ENCODE measurements at regions of chr16 and their contacts with region 1.

Region 1: GRCh38 chr16:4208341-4208751 is 33.5 kb downstream of the SRL start:
- DNase-seq: peak in 4 of 5 donors; percentile 54 to 72 (median 62)
- ATAC-seq: peak in 2 of 4 donors; percentile 8 to 18
- H3K4me3 ChIP-seq: no peak overlapping the region
- H3K27ac ChIP-seq: peak overlapping the region; percentile 41 to 96 (median 70)
- H3K4me1 ChIP-seq: peaks cover 5 to 84% (median 42%) of the 10 kb centered on the region in 12 donors
- H3K27me3 ChIP-seq: no peaks in the 10 kb centered on the region
- CTCF ChIP-seq: no peak
- POLR2A ChIP-seq: no peak

Region 2: GRCh38 chr16:4019371-4019791 is 189.0 kb before region 1 on chr16:
- intact Hi-C with region 1: no loop called
- DNase-seq: no peak
- ATAC-seq: peak; percentile 34 to 67 (median 48)
- H3K4me3 ChIP-seq: peak overlapping the region in 10 of 12 donors; percentile 17 to 55 (median 41)
- H3K27ac ChIP-seq: peak overlapping the region in 8 of 12 donors; percentile 15 to 63 (median 54)
- H3K4me1 ChIP-seq: peaks cover 0 to 18% (median 6%) of the 10 kb centered on the region in 12 donors
- H3K27me3 ChIP-seq: no peaks in the 10 kb centered on the region
- CTCF ChIP-seq: no peak
- POLR2A ChIP-seq: no peak

Region 3: GRCh38 chr16:4133897-4134372 is 74.4 kb before region 1 on chr16:
- intact Hi-C with region 1: no loop called
- DNase-seq: peak in 1 of 5 donors; percentile 50
- ATAC-seq: no peak
- H3K4me3 ChIP-seq: no peak overlapping the region
- H3K27ac ChIP-seq: no peak overlapping the region
- H3K4me1 ChIP-seq: no peaks in the 10 kb centered on the region
- H3K27me3 ChIP-seq: no peaks in the 10 kb centered on the region
- CTCF ChIP-seq: no peak
- POLR2A ChIP-seq: no peak

Region 4: GRCh38 chr16:4244254-4245076 is 36.1 kb after region 1 on chr16:
- intact Hi-C with region 1: loop called in 4 of 10 experiments (anchors 5 kb)
- DNase-seq: no peak
- ATAC-seq: no peak
- H3K4me3 ChIP-seq: no peak overlapping the region
- H3K27ac ChIP-seq: no peak overlapping the region
- H3K4me1 ChIP-seq: peaks cover 0 to 16% (median 4%) of the 10 kb centered on the region in 12 donors
- H3K27me3 ChIP-seq: no peaks in the 10 kb centered on the region
- CTCF ChIP-seq: no peak
- POLR2A ChIP-seq: no peak

Region 5: DNA sequence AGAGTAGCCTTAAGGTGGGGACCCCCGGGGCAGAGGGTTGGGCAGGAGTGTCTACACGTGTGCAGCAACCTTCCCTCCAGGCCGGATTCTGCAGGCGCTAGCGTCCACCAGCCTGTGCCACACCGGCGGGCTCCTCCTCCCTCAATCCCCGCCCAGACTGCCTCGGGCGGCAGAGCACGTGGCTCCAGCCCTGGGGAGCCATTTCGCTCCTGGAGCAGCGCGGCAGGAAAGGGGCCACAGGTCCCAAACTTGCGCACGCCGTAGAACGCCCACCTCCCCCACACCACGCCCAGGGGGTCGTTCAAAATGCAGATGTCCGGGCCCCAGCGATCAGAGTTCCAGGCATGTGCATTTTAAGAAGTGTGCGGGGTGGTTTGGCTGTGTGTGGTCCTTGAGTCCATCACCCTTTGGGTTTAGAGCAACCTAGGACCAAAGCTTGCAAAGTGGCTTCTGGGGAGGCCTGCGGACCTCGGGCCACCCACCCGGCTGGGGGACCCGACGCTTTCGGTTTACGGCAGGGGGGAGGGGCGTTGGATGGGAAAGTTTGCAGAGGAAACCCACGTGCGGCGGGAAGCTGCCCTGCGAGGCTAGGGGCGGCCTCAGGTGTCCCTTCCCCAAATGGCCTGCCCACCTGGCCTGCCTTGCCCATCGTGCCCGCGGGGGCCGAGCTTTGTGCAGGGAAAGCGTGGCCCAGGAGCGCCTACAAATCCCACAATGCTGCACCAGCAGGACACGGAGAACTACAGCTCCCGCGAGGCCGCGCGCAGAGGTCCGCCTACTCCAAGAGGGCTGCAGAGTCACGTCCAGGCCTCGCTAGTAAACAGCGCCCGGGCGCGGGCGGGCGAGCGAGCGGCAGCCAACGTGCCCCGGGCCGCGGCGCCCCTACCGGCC is 63.1 kb after region 1 on chr16:
- intact Hi-C with region 1: no loop called
- DNase-seq: peak; percentile 92 to 96 (median 94)
- ATAC-seq: peak; percentile 89 to 93 (median 90)
- H3K4me3 ChIP-seq: peak overlapping the region; percentile 64 to 93 (median 86)
- H3K27ac ChIP-seq: peak overlapping the region; percentile 62 to 97 (median 92)
- H3K4me1 ChIP-seq: peaks cover 0 to 28% (median 13%) of the 10 kb centered on the region in 12 donors
- H3K27me3 ChIP-seq: no peaks in the 10 kb centered on the region
- CTCF ChIP-seq: peak in 5 of 12 donors; percentile 9 to 29 (median 28)
- POLR2A ChIP-seq: peak in 1 of 2 donors; percentile 68

Region 6: GRCh38 chr16:4319454-4320421 is 111.4 kb after region 1 on chr16:
- intact Hi-C with region 1: no loop called
- DNase-seq: peak in 3 of 5 donors; percentile 74 to 82 (median 80)
- ATAC-seq: peak in 2 of 4 donors; percentile 2 to 10
- H3K4me3 ChIP-seq: peak overlapping the region in 7 of 12 donors; percentile 10 to 26 (median 18)
- H3K27ac ChIP-seq: peak overlapping the region in 11 of 12 donors; percentile 12 to 99 (median 88)
- H3K4me1 ChIP-seq: peaks cover 16 to 91% (median 73%) of the 10 kb centered on the region in 12 donors
- H3K27me3 ChIP-seq: peaks cover 0 to 17% (median 0%) of the 10 kb centered on the region in 9 donors
- CTCF ChIP-seq: no peak
- POLR2A ChIP-seq: no peak